ENCODE measurements at regions of chr9 and their contacts with region 1.

Region 1: DNA sequence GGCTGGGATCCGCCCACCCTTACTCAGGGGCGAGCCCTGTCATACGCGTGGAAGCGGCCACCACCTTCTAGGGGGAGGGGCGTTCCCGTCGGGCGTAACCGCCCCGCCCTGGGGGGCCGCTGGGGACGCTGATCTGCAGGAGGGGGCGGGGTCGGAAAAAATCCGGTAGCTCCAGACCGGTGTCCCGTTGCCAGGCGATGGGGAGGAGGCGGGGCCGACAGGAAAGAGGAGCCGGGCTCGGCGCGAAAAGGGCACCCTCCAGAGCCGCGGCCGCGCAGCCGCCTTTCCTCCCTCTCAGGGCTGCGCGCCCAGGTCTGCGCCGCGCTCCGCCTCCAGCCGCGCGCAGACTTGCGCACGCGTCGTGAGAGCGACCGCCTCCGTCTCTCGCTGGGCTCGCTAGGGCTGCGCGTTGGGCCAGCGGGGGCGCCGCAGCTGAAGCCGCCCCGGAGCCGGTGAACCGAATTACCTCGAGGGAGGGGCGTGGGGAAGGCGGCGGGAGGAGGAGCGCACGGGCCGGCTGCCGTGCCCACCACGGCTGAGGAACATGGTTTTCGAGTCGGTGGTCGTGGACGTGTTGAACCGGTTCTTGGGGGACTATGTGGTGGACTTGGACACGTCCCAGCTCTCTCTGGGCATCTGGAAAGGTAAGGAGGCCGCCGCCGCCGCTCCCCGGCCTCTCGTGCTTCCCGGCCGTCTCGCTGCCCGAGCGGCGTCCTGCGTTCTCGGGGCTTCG is at the start of gene VPS13A:
- DNase-seq: peak; percentile 93
- H3K4me3 Mint-ChIP-seq: peak within 1 kb of the TSS; percentile 91
- H3K27ac Mint-ChIP-seq: peak within 1 kb of the TSS; percentile 90
- H3K4me1 Mint-ChIP-seq: peaks cover 27% of the 10 kb centered on the region
- H3K27me3 Mint-ChIP-seq: peaks cover 12% of the 10 kb centered on the region
- total RNA-seq, gene VPS13A: 43.8 and 46.9 TPM in 2 replicates

Region 2: DNA sequence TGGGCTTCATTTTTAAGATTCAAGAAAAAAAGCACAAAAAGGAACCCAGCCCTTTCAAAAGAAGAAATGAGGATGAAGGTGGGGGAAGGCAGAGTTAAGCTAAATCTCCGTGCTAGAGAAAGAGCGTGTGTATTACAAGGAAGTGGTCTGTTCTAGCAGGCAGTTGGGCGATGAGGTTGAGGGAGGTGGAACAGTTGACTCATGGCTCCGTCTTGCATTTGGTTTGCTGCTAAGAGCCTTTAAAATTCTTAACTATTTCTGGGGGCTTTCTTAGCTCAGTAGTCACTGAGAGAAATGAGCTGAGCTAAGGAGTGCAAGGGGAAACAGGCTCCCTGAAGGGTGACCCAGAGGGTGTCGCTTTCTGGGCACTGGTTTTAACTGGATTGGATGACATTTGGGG is 601.0 kb before region 1 on chr9:
- intact Hi-C with region 1: no loop called
- DNase-seq: peak; percentile 57
- H3K4me3 Mint-ChIP-seq: no peak overlapping the region
- H3K27ac Mint-ChIP-seq: peak overlapping the region; percentile 73
- H3K4me1 Mint-ChIP-seq: peaks cover 29% of the 10 kb centered on the region
- H3K27me3 Mint-ChIP-seq: peaks cover 5% of the 10 kb centered on the region

Region 3: GRCh38 chr9:76987594-76988200 is 189.6 kb before region 1 on chr9:
- intact Hi-C with region 1: no loop called
- DNase-seq: no peak
- H3K4me3 Mint-ChIP-seq: no peak overlapping the region
- H3K27ac Mint-ChIP-seq: no peak overlapping the region
- H3K4me1 Mint-ChIP-seq: no peaks in the 10 kb centered on the region
- H3K27me3 Mint-ChIP-seq: no peaks in the 10 kb centered on the region

Region 4: DNA sequence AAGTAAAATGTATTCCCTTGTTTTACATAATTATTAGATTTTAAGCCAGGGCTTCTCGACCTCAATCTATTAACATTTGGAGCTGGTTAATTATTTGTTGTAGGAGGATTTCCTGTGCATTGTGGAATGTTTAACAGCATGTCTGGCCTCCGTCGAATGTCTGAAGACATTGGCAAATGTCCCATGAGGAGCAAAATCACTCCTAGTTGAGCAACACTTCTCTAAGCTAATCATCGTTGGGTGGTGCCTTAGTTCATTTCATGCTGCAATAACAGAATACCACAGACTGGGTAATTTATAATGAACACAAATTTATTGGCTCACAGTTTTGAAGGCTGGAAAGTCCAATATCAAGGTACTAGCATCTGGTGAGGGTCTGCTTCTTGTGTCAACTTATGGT is 13.4 kb before region 1 on chr9:
- intact Hi-C with region 1: loop called (anchors 1 kb)
- DNase-seq: no peak
- H3K4me3 Mint-ChIP-seq: no peak overlapping the region
- H3K27ac Mint-ChIP-seq: no peak overlapping the region
- H3K4me1 Mint-ChIP-seq: no peaks in the 10 kb centered on the region
- H3K27me3 Mint-ChIP-seq: peaks cover 14% of the 10 kb centered on the region

Region 5: GRCh38 chr9:77304543-77304942 is 127.2 kb after region 1 on chr9:
- intact Hi-C with region 1: loop called (anchors 5 kb)
- DNase-seq: no peak
- H3K4me3 Mint-ChIP-seq: no peak overlapping the region
- H3K27ac Mint-ChIP-seq: peak overlapping the region; percentile 28
- H3K4me1 Mint-ChIP-seq: peaks cover 7% of the 10 kb centered on the region
- H3K27me3 Mint-ChIP-seq: no peaks in the 10 kb centered on the region